ENCODE measurements at regions of chr3 and their contacts with region 1.

Region 1: GRCh38 chr3:138950006-138950644 is 3.1 kb downstream of the FOXL2NB start:
- DNase-seq: no peak

Region 2: GRCh38 chr3:139281522-139282196 is 331.5 kb after region 1 on chr3:
- in situ Hi-C with region 1: no loop called
- DNase-seq: no peak

Region 3: GRCh38 chr3:139339219-139339906 is 389.2 kb after region 1 on chr3:
- in situ Hi-C with region 1: loop called (anchors 10 kb)
- DNase-seq: peak; percentile 77